Right cardiac atrium (tissue), 5 donors: ENCODE measurements at regions of chr3 and their contacts with region 1.

Region 1: GRCh38 chr3:37855363-37855970 is 6.2 kb upstream of the CTDSPL start:
- DNase-seq: peak; percentile 85 to 96 (median 93)
- ATAC-seq: peak; percentile 47 to 61
- H3K4me3 ChIP-seq: no peak overlapping the region
- H3K27ac ChIP-seq: no peak overlapping the region
- H3K4me1 ChIP-seq: peaks cover 5% of the 10 kb centered on the region
- H3K27me3 ChIP-seq: no peaks in the 10 kb centered on the region

Region 2: GRCh38 chr3:37967260-37967881 is 111.9 kb after region 1 on chr3:
- intact Hi-C with region 1: loop called (anchors 2 to 5 kb)
- DNase-seq: peak; percentile 73 to 87 (median 79)
- ATAC-seq: peak; percentile 70 to 73
- H3K4me3 ChIP-seq: no peak overlapping the region
- H3K27ac ChIP-seq: no peak overlapping the region
- H3K4me1 ChIP-seq: peaks cover 4% of the 10 kb centered on the region
- H3K27me3 ChIP-seq: no peaks in the 10 kb centered on the region